ENCODE measurements at regions of chr5 and their contacts with region 1.

Region 1: GRCh38 chr5:40834849-40835787 is at the start of gene RPL37:
- DNase-seq: peak; percentile 94
- ATAC-seq: peak; percentile 98
- H3K4me3 ChIP-seq: peak within 1 kb of the TSS; percentile 61 to 82 (median 82)
- H3K27ac ChIP-seq: peak within 1 kb of the TSS; percentile 84
- H3K4me1 ChIP-seq: peaks cover 46% of the 10 kb centered on the region
- H3K27me3 ChIP-seq: no peaks in the 10 kb centered on the region; a peak in 1 of 5 replicates
- CTCF ChIP-seq: peak; percentile 48
- EP300 ChIP-seq: peak in 1 of 2 experiments; percentile 27; a peak in 1 of 4 replicates
- POLR2A ChIP-seq: peak; percentile 98 to 99
- RAD21 ChIP-seq: no peak; the same call in 1 of the 2 replicates
- total RNA-seq, gene RPL37: 1,981 and 2,192 TPM in 2 replicates

Region 2: DNA sequence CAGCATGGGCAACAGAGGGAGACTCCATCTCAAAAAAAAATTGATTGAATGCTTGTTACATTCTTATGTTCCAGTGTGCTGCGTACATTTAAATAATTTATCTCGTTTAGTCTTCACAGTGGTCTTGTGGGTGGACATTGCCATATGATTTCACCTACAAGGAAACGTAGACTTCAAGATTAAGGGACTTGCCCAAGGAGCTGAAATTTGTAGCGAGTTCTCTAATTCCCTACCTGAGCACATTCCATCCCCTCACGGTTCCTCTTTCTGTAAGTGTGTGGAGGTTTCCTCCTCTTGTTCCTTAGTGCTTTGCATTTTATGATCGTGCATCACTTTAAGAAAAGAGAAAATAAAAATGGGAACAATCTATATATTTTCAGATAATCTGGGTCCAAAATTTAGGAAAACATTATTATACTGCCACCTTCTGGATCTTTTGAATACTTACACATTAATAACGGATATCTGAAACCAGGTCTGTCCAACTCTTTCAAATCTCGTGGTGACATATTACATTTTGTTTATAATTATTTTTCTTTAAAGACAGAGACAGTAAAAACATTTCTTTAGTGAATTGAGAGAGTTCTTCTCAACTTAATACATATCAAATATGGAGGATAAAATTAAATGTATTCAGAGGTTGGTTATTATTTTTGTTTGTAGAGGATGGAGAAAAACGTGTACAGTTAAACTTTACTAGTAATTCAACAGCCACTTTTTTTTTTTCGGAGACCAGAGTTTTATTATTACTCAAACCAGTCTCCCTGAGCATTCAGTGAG is 44.2 kb after region 1 on chr5:
- CTCF ChIA-PET with region 1: no interaction called
- POLR2A ChIA-PET with region 1: no interaction called
- in situ Hi-C with region 1: no loop called
- intact Hi-C with region 1: loop called (anchors 2 kb)
- DNase-seq: peak; percentile 10
- ATAC-seq: peak; percentile 33; the same call in 1 of the 3 replicates
- H3K4me3 ChIP-seq: no peak overlapping the region
- H3K27ac ChIP-seq: no peak overlapping the region
- H3K4me1 ChIP-seq: peaks cover 15% of the 10 kb centered on the region
- H3K27me3 ChIP-seq: no peaks in the 10 kb centered on the region
- CTCF ChIP-seq: peak; percentile 51
- EP300 ChIP-seq: no peak
- POLR2A ChIP-seq: no peak
- RAD21 ChIP-seq: 0 out of 2 replicates have a peak, but pooled peaks have one; percentile 27

Measured in HepG2 (cell line).